ENCODE measurements at regions of chr17 and their contacts with region 1.

Region 1: GRCh38 chr17:12620200-12620720 is 45.4 kb upstream of the MYOCD start:
- DNase-seq: no peak
- ATAC-seq: no peak
- H3K4me3 ChIP-seq: no peak overlapping the region
- H3K27ac ChIP-seq: no peak overlapping the region
- H3K4me1 ChIP-seq: peaks cover 0 to 17% (median 0%) of the 10 kb centered on the region in 9 donors
- H3K27me3 ChIP-seq: no peaks in the 10 kb centered on the region
- CTCF ChIP-seq: no peak

Region 2: GRCh38 chr17:12545877-12546513 is 74.3 kb before region 1 on chr17:
- intact Hi-C with region 1: loop called in 1 of 10 experiments (anchors 5 kb)
- DNase-seq: peak in 1 of 2 donors; percentile 31
- ATAC-seq: peak; percentile 73 to 90 (median 84)
- H3K4me3 ChIP-seq: no peak overlapping the region
- H3K27ac ChIP-seq: no peak overlapping the region
- H3K4me1 ChIP-seq: peaks cover 0 to 11% (median 0%) of the 10 kb centered on the region in 9 donors
- H3K27me3 ChIP-seq: no peaks in the 10 kb centered on the region
- CTCF ChIP-seq: peak; percentile 45 to 78 (median 72)

Region 3: DNA sequence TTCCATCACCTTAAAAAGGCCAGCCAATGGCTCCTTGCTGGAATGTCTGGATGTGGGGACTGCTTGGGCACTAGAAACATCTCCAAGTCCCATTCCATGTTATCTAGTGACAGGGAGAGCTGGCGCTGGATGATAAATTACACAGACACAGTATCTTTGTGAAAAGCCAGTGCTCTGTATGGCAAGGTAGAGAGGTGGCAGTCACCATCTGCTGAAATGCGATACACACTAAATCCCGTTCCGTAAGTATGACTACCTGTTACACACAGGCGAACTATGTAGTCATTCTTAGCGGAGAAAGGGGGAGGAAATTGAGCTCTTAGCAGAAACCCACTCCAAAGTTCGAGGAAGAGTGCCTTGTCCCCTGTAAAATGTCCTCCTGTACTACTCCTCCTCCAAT is 35.5 kb before region 1 on chr17:
- intact Hi-C with region 1: loop called in 1 of 10 experiments (anchors 5 kb)
- DNase-seq: no peak
- ATAC-seq: peak; percentile 50 to 83 (median 72)
- H3K4me3 ChIP-seq: peak overlapping the region in 7 of 10 donors; percentile 3 to 28 (median 9)
- H3K27ac ChIP-seq: peak overlapping the region in 6 of 10 donors; percentile 30 to 59 (median 54)
- H3K4me1 ChIP-seq: peaks cover 0 to 26% (median 4%) of the 10 kb centered on the region in 9 donors
- H3K27me3 ChIP-seq: no peaks in the 10 kb centered on the region
- CTCF ChIP-seq: peak in 2 of 9 donors; percentile 21 to 24

Region 4: DNA sequence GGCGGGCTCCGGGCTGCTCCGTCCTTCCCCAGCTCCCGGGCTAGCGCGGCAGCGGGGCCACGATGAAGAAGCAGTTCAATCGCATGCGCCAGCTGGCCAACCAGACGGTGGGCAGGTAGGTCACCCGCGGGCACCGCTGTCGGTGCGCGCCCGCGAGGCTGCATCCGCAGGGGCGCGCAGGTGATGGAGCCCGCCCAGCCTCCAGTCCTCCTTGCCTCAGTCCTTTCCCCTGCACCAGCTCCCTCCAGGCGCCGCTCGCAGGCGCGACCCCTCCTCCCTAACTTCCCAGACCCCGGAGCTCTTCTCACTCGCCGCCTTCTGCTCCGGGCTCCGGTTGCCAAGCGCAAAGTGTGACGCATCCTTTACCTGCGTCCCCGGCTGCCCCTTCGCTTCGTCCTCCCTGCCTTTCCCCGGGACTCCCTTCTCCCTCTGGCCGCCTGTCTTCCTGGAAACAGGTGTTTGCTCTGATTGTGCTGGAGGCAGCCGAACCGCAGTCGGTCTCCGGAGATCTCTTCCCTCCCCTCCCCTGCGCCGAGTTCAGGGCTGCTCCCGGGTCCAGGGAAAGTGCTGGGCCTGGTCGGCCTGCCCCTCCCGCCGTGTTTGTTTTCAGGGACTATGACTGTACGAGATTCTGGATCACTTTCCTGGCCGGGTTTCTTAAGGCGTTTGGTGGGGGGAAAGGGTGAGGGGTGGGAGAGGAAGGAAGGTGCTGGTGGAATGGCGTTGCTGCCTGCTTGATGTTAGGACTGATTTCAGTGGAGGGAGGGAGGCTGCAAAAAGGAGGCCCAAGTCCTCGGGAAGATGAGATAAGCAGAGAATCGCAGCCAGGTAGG is 169.7 kb after region 1 on chr17:
- intact Hi-C with region 1: no loop called
- DNase-seq: peak in 1 of 2 donors; percentile 13
- ATAC-seq: peak; percentile 8 to 40 (median 32)
- H3K4me3 ChIP-seq: peak overlapping the region; percentile 41 to 89 (median 71)
- H3K27ac ChIP-seq: peak overlapping the region in 9 of 10 donors; percentile 44 to 75 (median 58)
- H3K4me1 ChIP-seq: peaks cover 0 to 21% (median 3%) of the 10 kb centered on the region in 9 donors
- H3K27me3 ChIP-seq: peaks cover 0 to 31% (median 0%) of the 10 kb centered on the region in 7 donors
- CTCF ChIP-seq: no peak